Posterior vena cava (tissue), 2 donors: ENCODE measurements at regions of chr7 and their contacts with region 1.

Region 1: GRCh38 chr7:140653319-140654108 is 12.9 kb upstream of the DENND2A start:
- DNase-seq: peak; percentile 76

Region 2: DNA sequence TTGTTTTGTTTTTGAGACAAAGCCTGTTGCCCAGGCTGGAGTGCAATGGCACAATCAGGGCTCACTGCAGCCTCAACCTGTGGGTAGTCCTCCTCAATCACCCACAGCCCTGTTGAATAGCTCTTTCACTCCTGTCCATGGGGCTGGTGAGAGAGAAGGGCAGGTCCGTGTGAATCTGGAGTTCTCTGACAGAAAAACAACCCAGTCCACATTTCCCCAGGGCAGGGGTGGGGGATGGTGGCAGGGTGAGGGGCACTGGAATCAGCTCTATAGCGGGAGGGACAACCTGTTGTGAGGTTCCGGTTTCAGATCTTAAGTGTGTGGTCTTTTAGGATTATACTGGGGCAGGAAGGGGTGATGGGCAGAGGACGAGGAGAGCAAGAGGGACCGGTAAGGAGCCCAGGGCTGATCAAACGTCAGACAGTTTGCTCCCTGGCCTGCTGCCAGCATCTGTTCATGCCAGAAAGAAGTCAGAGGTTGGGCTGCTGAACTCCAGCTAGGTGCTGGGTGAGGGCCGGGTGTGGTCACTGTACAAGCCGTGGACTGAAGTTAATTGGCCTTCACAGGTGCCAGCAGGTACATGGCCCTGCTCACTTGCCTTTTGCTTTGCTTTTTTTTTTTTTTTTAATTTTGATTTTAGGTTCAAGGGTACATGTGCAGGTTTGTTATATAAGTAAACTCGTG is 141.1 kb before region 1 on chr7:
- intact Hi-C with region 1: loop called (anchors 2 to 5 kb)
- DNase-seq: no peak

Region 3: DNA sequence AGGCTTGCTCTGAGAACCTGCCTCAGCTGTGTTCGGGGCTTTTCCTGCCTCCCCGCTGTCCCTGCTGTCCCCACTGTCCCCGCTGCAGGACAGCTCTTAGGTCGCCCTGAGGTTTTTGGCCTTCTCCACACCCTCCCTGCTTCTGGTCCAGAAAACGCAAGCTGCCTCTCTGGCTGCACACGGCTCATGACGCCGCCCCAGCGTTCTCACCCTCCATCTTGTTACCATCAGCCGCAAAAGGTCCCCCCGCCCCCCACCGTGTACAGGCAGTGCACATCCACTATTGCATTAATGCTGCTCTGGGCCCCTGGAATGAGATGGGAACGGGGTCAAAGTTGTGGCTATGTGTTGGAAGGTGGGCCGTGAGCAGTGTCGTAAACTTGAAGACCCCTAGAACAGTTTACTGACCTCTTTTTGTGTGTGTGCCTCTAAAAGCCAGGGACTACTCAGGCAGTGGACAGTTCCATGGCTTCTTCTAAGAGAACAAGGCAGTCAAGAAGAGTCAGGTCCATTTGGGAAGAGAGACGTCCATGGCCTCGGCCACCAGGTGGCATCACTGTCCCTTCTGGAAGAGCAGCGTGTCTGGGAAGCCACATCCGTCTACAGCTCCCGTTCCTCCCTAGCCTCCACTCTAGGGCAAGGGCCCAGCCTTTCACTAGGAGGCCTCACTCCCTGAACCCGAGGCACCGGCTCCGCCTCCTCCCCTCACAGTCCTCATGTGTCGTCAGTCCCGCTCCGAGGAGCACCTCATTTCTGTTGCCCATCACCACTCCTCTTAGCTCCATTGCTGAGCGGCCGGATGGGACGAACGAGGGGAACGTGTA is 135.8 kb before region 1 on chr7:
- intact Hi-C with region 1: loop called (anchors 2 to 5 kb)
- DNase-seq: peak; percentile 96

Region 4: DNA sequence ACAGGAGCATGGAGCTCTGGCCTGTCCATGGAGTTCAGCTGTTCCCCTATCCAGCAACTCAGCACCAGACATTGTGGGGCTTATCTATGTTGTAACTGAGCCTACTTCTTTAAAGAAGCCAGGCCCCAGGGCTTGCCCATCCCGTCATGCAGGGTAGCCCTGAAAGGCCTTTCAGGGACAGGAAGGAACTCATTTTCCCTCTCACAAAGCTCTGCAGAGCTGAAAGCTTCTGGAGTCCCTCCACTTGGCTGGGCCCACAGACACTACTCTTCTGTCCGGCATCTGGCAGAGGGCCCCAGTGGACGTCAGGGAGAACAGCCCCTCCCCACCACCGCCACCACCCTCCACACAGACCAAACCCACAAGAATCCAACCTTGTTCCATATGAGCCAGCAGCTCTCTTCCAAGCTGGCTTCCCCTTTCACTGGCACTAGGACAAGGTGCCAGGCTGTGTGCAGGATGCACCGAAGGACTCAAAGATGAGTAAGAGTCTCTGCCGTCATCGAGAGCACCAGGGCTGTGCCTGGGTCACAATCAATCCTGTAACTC is 46.0 kb before region 1 on chr7:
- intact Hi-C with region 1: no loop called
- DNase-seq: peak; percentile 94

Region 5: DNA sequence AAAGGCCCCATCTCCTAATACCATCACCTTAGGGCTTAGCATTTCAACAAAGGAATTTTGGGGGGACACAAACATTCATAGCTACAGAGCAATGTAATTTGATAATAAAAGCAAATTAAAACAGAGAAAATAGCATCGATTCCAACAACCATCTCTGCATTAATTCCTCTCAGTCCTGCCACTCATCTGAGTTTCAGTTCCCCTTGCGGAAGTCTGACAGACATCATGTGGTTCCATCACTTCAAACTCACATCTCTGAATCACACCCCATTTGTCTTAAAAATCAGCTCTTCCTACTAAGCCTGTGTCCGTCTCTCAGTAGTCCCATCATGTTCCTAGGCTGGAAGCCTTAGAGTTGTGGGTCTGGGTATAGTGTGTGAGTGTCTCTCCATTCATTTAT is 22.8 kb after region 1 on chr7:
- intact Hi-C with region 1: no loop called
- DNase-seq: peak; percentile 9